ENCODE measurements at regions of chr11 and their contacts with region 1.

Region 1: DNA sequence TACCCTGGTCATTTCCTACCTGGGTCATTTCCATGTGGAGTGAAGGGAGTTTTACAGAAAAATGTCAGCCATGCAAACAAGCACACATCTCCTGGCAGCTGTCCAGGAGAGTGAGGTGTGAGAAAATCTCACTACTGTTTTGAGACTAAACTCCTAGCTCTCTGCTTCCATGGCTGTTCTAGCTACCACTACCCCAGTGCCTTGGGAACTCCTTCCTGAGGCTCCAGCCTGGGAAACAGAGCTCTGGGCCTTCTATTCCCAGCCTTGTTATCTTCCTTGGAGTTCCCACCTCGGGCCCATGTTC is 2.8 kb upstream of the TMPRSS13 start:
- DNase-seq: peak; percentile 91
- ATAC-seq: peak; percentile 35
- H3K4me3 Mint-ChIP-seq: peak overlapping the region; percentile 24
- H3K27ac Mint-ChIP-seq: peak overlapping the region; percentile 98
- H3K4me1 Mint-ChIP-seq: peaks cover 84% of the 10 kb centered on the region
- H3K27me3 Mint-ChIP-seq: no peaks in the 10 kb centered on the region
- CTCF ChIP-seq: no peak

Region 2: GRCh38 chr11:117887981-117888566 is 43.9 kb before region 1 on chr11:
- CTCF ChIA-PET with region 1: no interaction called
- POLR2A ChIA-PET with region 1: no interaction called
- intact Hi-C with region 1: no loop called
- DNase-seq: no peak
- ATAC-seq: no peak
- H3K4me3 Mint-ChIP-seq: no peak overlapping the region
- H3K27ac Mint-ChIP-seq: no peak overlapping the region
- H3K4me1 Mint-ChIP-seq: no peaks in the 10 kb centered on the region
- H3K27me3 Mint-ChIP-seq: no peaks in the 10 kb centered on the region
- CTCF ChIP-seq: no peak

Region 3: GRCh38 chr11:117985953-117986887 is 54.2 kb after region 1 on chr11 and contains the start of gene IL10RA:
- CTCF ChIA-PET with region 1: interaction called, 3 read pairs
- POLR2A ChIA-PET with region 1: interaction called, 10 read pairs
- intact Hi-C with region 1: no loop called
- DNase-seq: peak; percentile 89
- ATAC-seq: peak; percentile 85
- H3K4me3 Mint-ChIP-seq: peak within 1 kb of the TSS; percentile 80
- H3K27ac Mint-ChIP-seq: peak within 1 kb of the TSS; percentile 97
- H3K4me1 Mint-ChIP-seq: peaks cover 74% of the 10 kb centered on the region
- H3K27me3 Mint-ChIP-seq: no peaks in the 10 kb centered on the region
- CTCF ChIP-seq: no peak
- total RNA-seq, gene IL10RA: 73.3 to 80.9 TPM

Region 4: GRCh38 chr11:118098996-118099837 is 167.2 kb after region 1 on chr11:
- CTCF ChIA-PET with region 1: no interaction called
- POLR2A ChIA-PET with region 1: no interaction called
- intact Hi-C with region 1: no loop called
- DNase-seq: no peak
- ATAC-seq: no peak
- H3K4me3 Mint-ChIP-seq: no peak overlapping the region
- H3K27ac Mint-ChIP-seq: no peak overlapping the region
- H3K4me1 Mint-ChIP-seq: peaks cover 4% of the 10 kb centered on the region
- H3K27me3 Mint-ChIP-seq: peaks cover 1% of the 10 kb centered on the region
- CTCF ChIP-seq: no peak